ENCODE measurements at regions of chr17 and their contacts with region 1.

Region 1: DNA sequence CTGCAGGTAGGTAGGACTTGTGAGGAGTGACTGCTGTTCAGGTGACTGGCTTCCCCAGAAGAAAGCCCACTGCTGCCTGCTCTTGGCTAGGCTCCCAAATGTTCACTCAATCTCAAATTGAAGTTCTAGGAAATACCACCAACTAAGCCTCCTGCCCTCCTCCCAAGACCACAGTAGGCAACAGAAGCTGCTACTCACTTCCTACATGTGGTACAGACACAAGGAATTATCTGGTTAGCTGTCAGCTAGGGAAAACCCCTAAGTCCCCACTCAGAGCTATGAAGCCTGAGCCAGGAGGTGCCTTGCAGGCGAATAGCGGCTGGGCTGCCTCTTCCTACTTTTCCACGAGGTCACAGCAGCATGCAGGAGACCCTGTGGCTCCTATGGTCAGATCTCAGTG is 4.9 kb downstream of the FBXO39 start:
- DNase-seq: no peak
- H3K4me3 ChIP-seq: no peak overlapping the region
- H3K27ac ChIP-seq: no peak overlapping the region
- H3K4me1 ChIP-seq: no peaks in the 10 kb centered on the region
- H3K27me3 ChIP-seq: peaks cover 0 to 10% of the 10 kb centered on the region in 2 donors
- CTCF ChIP-seq: no peak
- POLR2A ChIP-seq: no peak

Region 2: DNA sequence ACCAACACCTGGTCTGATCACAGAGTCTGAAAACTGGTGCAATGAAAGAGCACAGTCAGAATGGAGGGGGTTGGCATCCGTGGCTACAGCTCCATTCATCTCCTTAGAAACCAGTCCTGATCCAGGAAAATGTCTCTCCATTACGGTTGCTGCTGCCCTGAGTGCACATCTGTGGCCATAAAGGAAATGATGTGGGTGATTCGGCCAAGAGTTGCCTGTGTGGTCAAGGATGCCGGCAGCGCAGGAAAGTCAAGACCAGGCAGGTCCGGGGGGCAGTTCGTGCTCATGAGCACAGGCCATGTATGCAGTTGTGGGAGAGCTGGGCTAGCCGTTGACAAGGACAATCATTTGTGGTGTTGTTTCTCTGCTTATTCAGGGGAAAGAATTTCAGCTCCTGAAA is 19.1 kb before region 1 on chr17:
- intact Hi-C with region 1: loop called (anchors 1 kb)
- DNase-seq: no peak
- H3K4me3 ChIP-seq: no peak overlapping the region
- H3K27ac ChIP-seq: no peak overlapping the region
- H3K4me1 ChIP-seq: no peaks in the 10 kb centered on the region
- H3K27me3 ChIP-seq: no peaks in the 10 kb centered on the region
- CTCF ChIP-seq: no peak
- POLR2A ChIP-seq: no peak

Region 3: GRCh38 chr17:6823011-6823442 is 42.1 kb after region 1 on chr17:
- intact Hi-C with region 1: no loop called
- DNase-seq: no peak
- H3K4me3 ChIP-seq: no peak overlapping the region
- H3K27ac ChIP-seq: no peak overlapping the region
- H3K4me1 ChIP-seq: no peaks in the 10 kb centered on the region
- H3K27me3 ChIP-seq: no peaks in the 10 kb centered on the region
- CTCF ChIP-seq: no peak
- POLR2A ChIP-seq: no peak

Region 4: GRCh38 chr17:6843241-6843880 is 62.5 kb after region 1 on chr17:
- intact Hi-C with region 1: no loop called
- DNase-seq: no peak
- H3K4me3 ChIP-seq: no peak overlapping the region
- H3K27ac ChIP-seq: no peak overlapping the region
- H3K4me1 ChIP-seq: no peaks in the 10 kb centered on the region
- H3K27me3 ChIP-seq: no peaks in the 10 kb centered on the region
- CTCF ChIP-seq: peak; percentile 26 to 62 (median 56)
- POLR2A ChIP-seq: no peak

Region 5: DNA sequence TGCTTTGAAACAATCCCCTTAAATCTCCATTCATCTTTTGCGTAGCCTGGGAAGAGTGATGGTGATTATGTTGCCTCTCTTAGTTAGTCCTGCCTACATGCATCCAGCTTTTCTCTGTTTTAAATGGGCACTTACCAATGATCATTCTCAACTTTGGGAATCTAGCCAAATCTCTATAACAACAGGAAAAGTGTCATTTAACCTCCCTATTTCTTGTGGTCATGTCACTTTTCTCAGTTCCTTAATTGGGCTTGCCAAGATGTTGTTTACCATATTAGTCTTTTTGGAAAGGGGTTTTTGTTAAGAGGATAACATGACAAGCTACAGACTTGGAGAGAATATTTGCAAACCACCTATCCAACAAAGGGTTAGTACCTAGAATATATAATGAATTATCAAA is 314.7 kb after region 1 on chr17:
- intact Hi-C with region 1: no loop called
- DNase-seq: no peak
- H3K4me3 ChIP-seq: no peak overlapping the region
- H3K27ac ChIP-seq: no peak overlapping the region
- H3K4me1 ChIP-seq: no peaks in the 10 kb centered on the region
- H3K27me3 ChIP-seq: peaks cover 0 to 16% of the 10 kb centered on the region in 2 donors
- CTCF ChIP-seq: no peak
- POLR2A ChIP-seq: no peak

Measured in breast epithelium (tissue), 4 donors.